ENCODE measurements at regions of chr20 and their contacts with region 1.

Region 1: GRCh38 chr20:2752567-2753460 is 47.6 kb downstream of the CPXM1 start:
- DNase-seq: peak; percentile 52
- ATAC-seq: peak; percentile 38
- H3K4me3 Mint-ChIP-seq: peak overlapping the region; percentile 62
- H3K27ac Mint-ChIP-seq: no peak overlapping the region
- H3K4me1 Mint-ChIP-seq: peaks cover 17% of the 10 kb centered on the region
- H3K27me3 Mint-ChIP-seq: peaks cover 70% of the 10 kb centered on the region

Region 2: DNA sequence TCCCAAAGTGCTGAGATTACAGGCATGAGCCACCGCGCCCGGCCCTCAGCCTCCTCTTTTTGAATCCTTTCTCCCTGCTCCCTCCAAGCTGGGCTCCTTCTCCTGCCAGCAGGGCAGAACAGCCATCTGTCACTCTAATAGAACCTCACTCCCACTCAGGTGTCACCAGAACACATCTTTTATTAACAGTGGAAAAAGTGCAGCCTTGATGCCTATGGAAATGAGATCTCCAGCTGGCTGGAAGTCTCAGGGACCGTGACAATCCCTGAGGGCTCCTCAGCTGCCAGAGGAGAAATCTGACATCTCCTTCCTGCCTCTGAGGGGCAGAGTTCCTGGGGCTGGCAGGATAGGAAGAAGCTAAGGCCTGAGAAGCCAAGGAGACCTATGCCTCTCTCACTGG is 188.4 kb before region 1 on chr20:
- CTCF ChIA-PET with region 1: no interaction called
- DNase-seq: no peak
- ATAC-seq: no peak
- H3K4me3 Mint-ChIP-seq: no peak overlapping the region
- H3K27ac Mint-ChIP-seq: no peak overlapping the region
- H3K4me1 Mint-ChIP-seq: no peaks in the 10 kb centered on the region
- H3K27me3 Mint-ChIP-seq: peaks cover 55% of the 10 kb centered on the region

Region 3: GRCh38 chr20:2729251-2729713 is 23.5 kb before region 1 on chr20:
- CTCF ChIA-PET with region 1: interaction called, 14 read pairs
- DNase-seq: no peak
- ATAC-seq: peak; percentile 78
- H3K4me3 Mint-ChIP-seq: no peak overlapping the region
- H3K27ac Mint-ChIP-seq: peak overlapping the region; percentile 66
- H3K4me1 Mint-ChIP-seq: peaks cover 7% of the 10 kb centered on the region
- H3K27me3 Mint-ChIP-seq: peaks cover 41% of the 10 kb centered on the region

Region 4: GRCh38 chr20:2984956-2985661 is 232.3 kb after region 1 on chr20:
- CTCF ChIA-PET with region 1: no interaction called
- DNase-seq: no peak
- ATAC-seq: no peak
- H3K4me3 Mint-ChIP-seq: no peak overlapping the region
- H3K27ac Mint-ChIP-seq: no peak overlapping the region
- H3K4me1 Mint-ChIP-seq: peaks cover 37% of the 10 kb centered on the region
- H3K27me3 Mint-ChIP-seq: no peaks in the 10 kb centered on the region

Measured in activated CD8-positive, alpha-beta memory T cell treated with anti-CD3 and anti-CD28 coated beads, Interleukin-2, amount 10 ng/mL, durations not matched to agents 7 days and 5 days (primary cell).